HepG2 (cell line): ENCODE measurements at regions of chr17 and their contacts with region 1.

Region 1: GRCh38 chr17:17591355-17592298 is at the start of gene PEMT:
- DNase-seq: peak; percentile 97
- ATAC-seq: peak; percentile 96
- H3K4me3 ChIP-seq: peak within 1 kb of the TSS; percentile 76 to 94 (median 94)
- H3K27ac ChIP-seq: peak within 1 kb of the TSS; percentile 89
- H3K4me1 ChIP-seq: peaks cover 26% of the 10 kb centered on the region
- H3K27me3 ChIP-seq: no peaks in the 10 kb centered on the region; a peak in 1 of 5 replicates
- CTCF ChIP-seq: no peak; the same call in 1 of the 2 replicates
- EP300 ChIP-seq: no peak
- POLR2A ChIP-seq: peak; percentile 68 to 84
- RAD21 ChIP-seq: peak; percentile 40
- total RNA-seq, gene PEMT: 16.4 and 31.7 TPM in 2 replicates

Region 2: GRCh38 chr17:17580662-17581470 is 10.8 kb before region 1 on chr17:
- CTCF ChIA-PET with region 1: no interaction called
- POLR2A ChIA-PET with region 1: interaction called, 49 read pairs
- in situ Hi-C with region 1: no loop called
- intact Hi-C with region 1: loop called (anchors 1 kb)
- DNase-seq: peak; percentile 77
- ATAC-seq: peak; percentile 96
- H3K4me3 ChIP-seq: peak overlapping the region in 1 of 3 experiments; percentile 55; a peak in 2 of 6 replicates
- H3K27ac ChIP-seq: peak overlapping the region; percentile 94
- H3K4me1 ChIP-seq: peaks cover 59% of the 10 kb centered on the region
- H3K27me3 ChIP-seq: no peaks in the 10 kb centered on the region
- CTCF ChIP-seq: peak; percentile 32; the same call in 1 of the 2 replicates
- EP300 ChIP-seq: peak in 1 of 2 experiments; percentile 74; a peak in 2 of 4 replicates
- POLR2A ChIP-seq: peak; percentile 51 to 59; a peak in 2 of 4 replicates
- RAD21 ChIP-seq: no peak

Region 3: DNA sequence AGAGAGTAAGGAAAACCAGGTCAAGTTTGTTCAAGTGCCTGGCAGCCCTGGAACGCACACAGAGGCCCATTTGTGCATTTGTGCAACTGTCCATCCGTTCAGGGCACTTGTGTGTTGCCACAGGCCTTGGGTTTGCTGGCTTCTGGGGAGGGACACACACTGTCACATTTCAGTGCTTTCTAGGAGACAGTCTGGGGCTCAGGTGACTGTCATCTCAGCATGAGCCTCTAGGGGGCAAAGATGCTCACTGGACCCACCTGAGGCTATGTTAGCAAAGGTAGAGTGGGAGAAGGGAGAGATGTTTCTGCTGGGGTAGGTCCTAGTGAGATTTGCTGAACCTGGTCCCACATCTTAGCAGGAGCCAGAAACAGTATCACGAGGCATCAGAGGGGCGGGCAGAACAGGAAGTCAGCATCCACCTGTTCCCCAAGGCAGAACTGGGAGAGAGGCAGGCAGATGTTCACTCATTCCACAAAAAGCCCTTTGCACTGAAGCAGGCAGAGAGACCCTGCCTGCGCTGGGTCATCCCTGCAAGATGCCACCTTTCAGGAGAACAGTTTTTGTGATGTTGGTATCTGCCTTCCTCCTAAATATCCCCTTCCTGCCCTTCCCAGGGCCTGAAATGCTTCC is 138.1 kb after region 1 on chr17:
- CTCF ChIA-PET with region 1: no interaction called
- POLR2A ChIA-PET with region 1: no interaction called
- in situ Hi-C with region 1: no loop called
- intact Hi-C with region 1: no loop called
- DNase-seq: peak; percentile 30
- ATAC-seq: peak; percentile 91
- H3K4me3 ChIP-seq: no peak overlapping the region
- H3K27ac ChIP-seq: no peak overlapping the region
- H3K4me1 ChIP-seq: peaks cover 5% of the 10 kb centered on the region; the same call in 1 of the 2 replicates
- H3K27me3 ChIP-seq: no peaks in the 10 kb centered on the region
- CTCF ChIP-seq: peak; percentile 86
- EP300 ChIP-seq: no peak
- POLR2A ChIP-seq: no peak
- RAD21 ChIP-seq: 0 out of 2 replicates have a peak, but pooled peaks have one; percentile 52